Body of pancreas (tissue), 4 donors: ENCODE measurements at regions of chr14 and their contacts with region 1.

Region 1: DNA sequence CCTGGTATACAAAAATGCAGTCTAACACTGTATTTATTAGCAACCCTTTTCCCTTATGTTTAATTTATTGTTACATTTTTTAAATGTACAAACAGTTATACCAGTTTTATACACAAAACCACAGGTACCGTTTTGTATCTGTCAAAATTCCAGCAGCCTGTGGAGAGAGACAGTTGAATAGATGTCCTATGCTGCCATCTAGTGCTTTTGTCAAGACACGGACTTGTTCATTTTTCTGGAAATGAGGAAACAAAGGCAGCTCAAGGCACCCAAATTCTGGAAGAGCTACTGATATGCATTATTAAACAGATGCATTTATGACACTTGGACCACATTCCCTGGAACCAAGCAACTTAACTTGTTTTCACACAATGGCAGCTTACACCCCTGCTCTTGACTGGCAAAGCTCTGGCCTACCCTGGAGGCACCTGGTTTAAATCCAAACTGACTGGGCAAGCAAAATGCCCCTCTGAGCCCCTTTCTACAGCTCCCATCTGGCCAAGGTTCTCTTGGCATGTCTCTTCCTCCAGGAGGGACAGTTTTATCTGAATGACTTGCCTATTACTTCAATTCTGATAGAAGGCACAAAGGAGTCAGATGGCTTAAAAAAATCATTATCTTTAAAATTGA is 286.9 kb upstream of the PRKD1 start:
- DNase-seq: peak; percentile 15 to 45 (median 28)
- ATAC-seq: peak; percentile 79
- H3K4me3 ChIP-seq: no peak overlapping the region
- H3K27ac ChIP-seq: no peak overlapping the region
- H3K4me1 ChIP-seq: no peaks in the 10 kb centered on the region
- H3K27me3 ChIP-seq: no peaks in the 10 kb centered on the region
- CTCF ChIP-seq: peak; percentile 40 to 77 (median 68)
- POLR2A ChIP-seq: no peak

Region 2: GRCh38 chr14:29558516-29558915 is 656.1 kb before region 1 on chr14:
- intact Hi-C with region 1: loop called (anchors 10 kb)
- DNase-seq: no peak
- ATAC-seq: no peak
- H3K4me3 ChIP-seq: no peak overlapping the region
- H3K27ac ChIP-seq: no peak overlapping the region
- H3K4me1 ChIP-seq: no peaks in the 10 kb centered on the region
- H3K27me3 ChIP-seq: no peaks in the 10 kb centered on the region
- CTCF ChIP-seq: no peak
- POLR2A ChIP-seq: no peak